ENCODE measurements at regions of chr1 and their contacts with region 1.

Region 1: DNA sequence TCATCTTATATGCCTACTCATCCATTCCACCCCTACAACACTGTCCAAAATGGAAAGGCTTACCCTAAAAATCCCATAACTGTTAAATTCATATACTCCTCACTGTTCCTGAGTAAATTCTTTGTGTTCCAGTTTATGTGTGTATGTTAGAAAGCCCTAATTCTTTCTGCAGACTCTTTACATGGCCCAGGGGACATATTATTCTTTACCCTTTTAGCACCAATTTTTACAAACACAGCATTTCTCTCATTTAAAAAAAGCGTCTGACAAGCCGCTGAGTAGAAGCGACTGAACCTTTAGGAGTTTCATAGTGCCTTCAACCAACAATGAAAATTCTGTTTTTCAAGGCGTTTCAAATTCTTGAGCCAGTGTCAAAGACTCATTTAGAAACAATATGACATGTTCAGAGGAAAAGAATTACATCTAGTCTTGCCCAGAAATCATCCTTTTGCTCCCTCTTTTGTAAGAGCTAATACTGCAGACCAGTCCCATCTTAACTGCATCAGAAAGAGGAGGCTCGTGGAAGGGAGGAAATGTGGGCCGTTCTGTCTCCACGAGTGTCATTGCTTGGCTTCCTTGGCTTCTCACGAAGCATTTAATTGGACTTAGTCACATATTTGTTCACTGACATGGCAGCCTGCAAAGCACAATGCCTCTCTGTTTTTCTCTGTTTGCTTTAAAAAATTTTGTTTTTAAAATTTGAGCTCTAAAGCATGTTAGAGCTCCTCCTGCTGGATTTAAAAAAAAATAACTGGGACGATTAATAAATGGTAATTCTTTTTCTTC is 21.3 kb upstream of the C1orf105 start:
- DNase-seq: peak; percentile 58
- ATAC-seq: peak; percentile 82
- H3K4me3 ChIP-seq: no peak overlapping the region
- H3K27ac ChIP-seq: no peak overlapping the region
- H3K4me1 ChIP-seq: peaks cover 5 to 9% of the 10 kb centered on the region in 2 experiments; a peak in 3 of 4 replicates
- H3K27me3 ChIP-seq: peaks cover 5% of the 10 kb centered on the region; the same call in 1 of the 2 replicates
- CTCF ChIP-seq: peak; percentile 24 to 91 (median 73); a peak in 5 of 6 replicates
- POLR2A ChIP-seq: no peak
- RAD21 ChIP-seq: peak; percentile 90

Region 2: DNA sequence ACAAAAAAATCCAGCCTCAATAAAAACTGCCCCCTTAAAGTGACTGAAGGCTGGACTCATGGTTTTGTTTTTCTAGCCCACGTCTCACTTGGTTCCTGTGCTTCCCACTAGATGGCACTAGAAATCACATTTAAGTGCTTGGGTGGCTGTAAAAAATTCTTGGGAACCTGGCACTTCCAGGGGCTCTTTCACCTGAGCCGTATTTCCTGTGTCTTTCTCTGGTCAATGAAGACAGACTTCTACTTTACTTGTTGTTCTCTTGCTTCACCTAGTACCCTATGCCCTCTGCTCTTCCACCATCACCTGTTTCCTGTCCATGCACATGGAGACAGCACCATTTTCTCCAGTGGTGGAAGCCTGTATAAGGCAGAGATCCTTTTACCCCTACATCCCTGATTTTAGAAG is 597.7 kb before region 1 on chr1:
- CTCF ChIA-PET with region 1: interaction called, 5 read pairs
- POLR2A ChIA-PET with region 1: no interaction called
- RAD21 ChIA-PET with region 1: no interaction called
- intact Hi-C with region 1: loop called (anchors 5 kb)
- DNase-seq: no peak
- ATAC-seq: peak; percentile 81
- H3K4me3 ChIP-seq: no peak overlapping the region
- H3K27ac ChIP-seq: no peak overlapping the region
- H3K4me1 ChIP-seq: peaks cover 0 to 4% of the 10 kb centered on the region in 2 experiments; a peak in 1 of 4 replicates
- H3K27me3 ChIP-seq: no peaks in the 10 kb centered on the region
- CTCF ChIP-seq: peak; percentile 73 to 86 (median 81)
- POLR2A ChIP-seq: no peak
- RAD21 ChIP-seq: peak; percentile 86

Region 3: GRCh38 chr1:171984850-171985485 is 414.2 kb before region 1 on chr1:
- CTCF ChIA-PET with region 1: interaction called, 11 read pairs
- POLR2A ChIA-PET with region 1: no interaction called
- RAD21 ChIA-PET with region 1: no interaction called
- intact Hi-C with region 1: no loop called
- DNase-seq: peak; percentile 29
- ATAC-seq: peak; percentile 71
- H3K4me3 ChIP-seq: no peak overlapping the region
- H3K27ac ChIP-seq: no peak overlapping the region
- H3K4me1 ChIP-seq: no peaks in the 10 kb centered on the region
- H3K27me3 ChIP-seq: no peaks in the 10 kb centered on the region
- CTCF ChIP-seq: peak; percentile 81 to 84 (median 81)
- POLR2A ChIP-seq: no peak
- RAD21 ChIP-seq: peak; percentile 88

Region 4: DNA sequence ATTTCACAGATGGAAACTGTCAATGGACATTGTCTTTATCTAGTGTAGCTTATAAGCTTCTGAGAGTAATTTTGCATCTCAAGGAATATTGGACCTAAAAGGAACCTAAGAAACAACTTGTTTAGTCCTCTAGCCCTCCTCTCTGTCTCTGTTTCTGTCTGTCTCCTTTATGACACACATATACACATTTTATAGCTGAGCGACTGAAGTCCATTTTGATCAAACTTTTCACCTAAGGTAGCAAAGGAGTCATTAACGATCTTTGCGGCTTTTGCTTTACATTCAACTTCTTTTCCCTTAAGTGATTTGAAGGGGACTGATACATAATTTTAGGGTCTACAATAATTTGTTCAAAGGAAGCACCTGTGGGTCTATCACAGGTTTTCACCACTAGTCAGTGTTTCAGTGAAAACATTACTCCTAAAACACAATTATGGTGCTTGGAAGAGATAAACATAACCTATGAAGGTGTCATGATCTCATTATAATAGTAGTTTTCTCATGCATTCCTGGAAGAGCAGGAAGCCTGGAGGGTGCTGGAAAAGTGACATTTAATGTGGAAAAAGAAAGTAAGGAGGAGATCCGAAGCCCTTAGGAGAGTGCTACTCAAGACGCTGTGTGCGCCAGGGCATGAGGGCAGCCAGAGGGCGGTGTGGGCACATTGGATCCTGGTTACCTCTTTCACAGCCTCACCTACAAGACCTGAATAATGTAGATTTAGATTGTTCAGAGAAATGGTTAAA is 309.2 kb before region 1 on chr1:
- CTCF ChIA-PET with region 1: interaction called, 3 read pairs
- POLR2A ChIA-PET with region 1: no interaction called
- RAD21 ChIA-PET with region 1: no interaction called
- intact Hi-C with region 1: loop called (anchors 1 kb)
- DNase-seq: peak; percentile 33
- ATAC-seq: peak; percentile 97
- H3K4me3 ChIP-seq: no peak overlapping the region
- H3K27ac ChIP-seq: no peak overlapping the region
- H3K4me1 ChIP-seq: no peaks in the 10 kb centered on the region
- H3K27me3 ChIP-seq: no peaks in the 10 kb centered on the region
- CTCF ChIP-seq: peak; percentile 81 to 86 (median 84)
- POLR2A ChIP-seq: no peak
- RAD21 ChIP-seq: peak; percentile 87

Region 5: DNA sequence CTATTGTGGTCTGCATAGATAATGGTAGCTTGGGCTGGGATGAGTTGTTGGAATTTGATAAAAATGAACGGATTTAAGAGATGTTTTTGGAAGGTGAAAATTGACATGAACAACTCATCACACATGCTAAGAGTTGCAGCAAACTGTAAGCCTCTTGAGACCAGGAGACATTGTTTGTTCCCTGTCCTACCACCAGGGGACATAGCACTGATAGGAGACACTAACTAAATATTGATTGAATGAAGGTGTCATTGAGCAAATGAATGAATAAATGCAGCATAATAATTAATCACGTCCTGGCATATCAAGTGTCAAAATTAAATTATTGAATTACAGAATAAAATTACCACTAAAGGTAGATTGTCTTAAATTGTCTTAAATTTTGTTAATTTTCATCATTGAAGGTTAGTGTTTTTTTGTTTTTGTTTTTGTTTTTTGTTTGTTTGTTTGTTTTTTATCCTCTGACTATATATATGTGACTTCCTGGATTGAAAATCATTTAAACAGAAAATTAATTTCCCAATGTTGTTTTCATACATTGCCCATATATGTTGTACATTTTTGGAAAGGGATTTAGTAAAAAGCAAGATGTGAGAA is 264.0 kb before region 1 on chr1:
- CTCF ChIA-PET with region 1: interaction called, 4 read pairs
- POLR2A ChIA-PET with region 1: no interaction called
- RAD21 ChIA-PET with region 1: no interaction called
- intact Hi-C with region 1: loop called (anchors 1 kb)
- DNase-seq: peak; percentile 32
- ATAC-seq: peak; percentile 82
- H3K4me3 ChIP-seq: no peak overlapping the region
- H3K27ac ChIP-seq: no peak overlapping the region
- H3K4me1 ChIP-seq: no peaks in the 10 kb centered on the region
- H3K27me3 ChIP-seq: no peaks in the 10 kb centered on the region
- CTCF ChIP-seq: peak; percentile 47 to 71 (median 70); a peak in 5 of 6 replicates
- POLR2A ChIP-seq: no peak
- RAD21 ChIP-seq: peak; percentile 65

Region 6: GRCh38 chr1:172322219-172323061 is 76.7 kb before region 1 on chr1:
- CTCF ChIA-PET with region 1: no interaction called
- POLR2A ChIA-PET with region 1: no interaction called
- RAD21 ChIA-PET with region 1: no interaction called
- intact Hi-C with region 1: no loop called
- DNase-seq: no peak
- ATAC-seq: no peak
- H3K4me3 ChIP-seq: no peak overlapping the region
- H3K27ac ChIP-seq: peak overlapping the region; percentile 10; the same call in 1 of the 2 replicates
- H3K4me1 ChIP-seq: peaks cover 20 to 29% of the 10 kb centered on the region in 2 experiments
- H3K27me3 ChIP-seq: no peaks in the 10 kb centered on the region
- CTCF ChIP-seq: no peak
- POLR2A ChIP-seq: no peak
- RAD21 ChIP-seq: no peak

Measured in HCT116 (cell line).